A673 (cell line): ENCODE measurements at regions of chrX and their contacts with region 1.

Region 1: DNA sequence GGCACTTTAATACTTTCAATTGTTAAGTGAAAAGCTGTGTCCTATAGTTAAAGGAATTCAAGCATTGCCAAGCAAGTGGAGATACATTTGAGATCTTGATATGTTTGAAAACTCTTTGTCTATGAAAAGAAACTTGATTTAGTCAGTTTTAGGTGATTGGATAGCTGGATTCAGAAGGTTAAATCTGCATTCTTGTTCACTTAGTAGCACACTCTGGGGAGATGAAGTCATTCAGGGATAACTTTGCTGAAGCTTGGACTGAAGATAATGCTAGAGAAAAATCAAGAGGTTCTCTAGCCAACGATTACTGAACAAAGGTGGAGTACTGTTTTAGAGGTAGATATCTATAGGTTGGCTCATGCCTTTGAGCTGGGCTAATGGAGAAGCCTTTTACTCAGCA is 90.6 kb downstream of the DCAF8L2 start:
- DNase-seq: no peak
- H3K4me3 ChIP-seq: no peak overlapping the region
- H3K27ac ChIP-seq: no peak overlapping the region
- H3K4me1 ChIP-seq: no peaks in the 10 kb centered on the region
- H3K27me3 ChIP-seq: no peaks in the 10 kb centered on the region
- CTCF ChIP-seq: no peak

Region 2: GRCh38 chrX:27555514-27555913 is 125.2 kb before region 1 on chrX:
- CTCF ChIA-PET with region 1: no interaction called
- POLR2A ChIA-PET with region 1: no interaction called
- intact Hi-C with region 1: loop called (anchors 5 kb)
- DNase-seq: peak; percentile 53
- H3K4me3 ChIP-seq: no peak overlapping the region
- H3K27ac ChIP-seq: no peak overlapping the region
- H3K4me1 ChIP-seq: no peaks in the 10 kb centered on the region
- H3K27me3 ChIP-seq: no peaks in the 10 kb centered on the region
- CTCF ChIP-seq: peak; percentile 69

Region 3: DNA sequence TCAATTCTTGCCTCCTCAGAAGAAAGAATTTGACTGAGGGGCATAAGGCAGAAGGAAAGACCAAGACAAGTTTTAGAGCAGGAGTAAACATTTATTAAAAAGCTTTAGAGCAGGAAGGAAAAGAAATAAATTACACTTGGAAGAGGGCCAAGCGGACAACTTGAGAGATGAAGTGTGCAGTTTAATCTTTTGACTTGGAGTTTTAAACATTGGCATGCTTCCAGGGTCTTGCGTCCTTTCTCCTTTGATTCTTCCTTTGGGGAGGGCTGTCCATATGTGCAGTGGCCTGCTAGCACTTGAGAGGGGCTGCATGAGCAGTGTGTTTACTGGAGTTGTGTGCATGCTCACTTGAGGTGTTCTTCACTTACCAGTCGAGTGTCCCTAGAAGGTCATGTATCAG is 630.7 kb after region 1 on chrX:
- CTCF ChIA-PET with region 1: no interaction called
- POLR2A ChIA-PET with region 1: no interaction called
- intact Hi-C with region 1: no loop called
- DNase-seq: no peak
- H3K4me3 ChIP-seq: no peak overlapping the region
- H3K27ac ChIP-seq: no peak overlapping the region
- H3K4me1 ChIP-seq: no peaks in the 10 kb centered on the region
- H3K27me3 ChIP-seq: no peaks in the 10 kb centered on the region
- CTCF ChIP-seq: no peak